Pancreas (tissue), 10 donors: ENCODE measurements at regions of chr3 and their contacts with region 1.

Region 1: DNA sequence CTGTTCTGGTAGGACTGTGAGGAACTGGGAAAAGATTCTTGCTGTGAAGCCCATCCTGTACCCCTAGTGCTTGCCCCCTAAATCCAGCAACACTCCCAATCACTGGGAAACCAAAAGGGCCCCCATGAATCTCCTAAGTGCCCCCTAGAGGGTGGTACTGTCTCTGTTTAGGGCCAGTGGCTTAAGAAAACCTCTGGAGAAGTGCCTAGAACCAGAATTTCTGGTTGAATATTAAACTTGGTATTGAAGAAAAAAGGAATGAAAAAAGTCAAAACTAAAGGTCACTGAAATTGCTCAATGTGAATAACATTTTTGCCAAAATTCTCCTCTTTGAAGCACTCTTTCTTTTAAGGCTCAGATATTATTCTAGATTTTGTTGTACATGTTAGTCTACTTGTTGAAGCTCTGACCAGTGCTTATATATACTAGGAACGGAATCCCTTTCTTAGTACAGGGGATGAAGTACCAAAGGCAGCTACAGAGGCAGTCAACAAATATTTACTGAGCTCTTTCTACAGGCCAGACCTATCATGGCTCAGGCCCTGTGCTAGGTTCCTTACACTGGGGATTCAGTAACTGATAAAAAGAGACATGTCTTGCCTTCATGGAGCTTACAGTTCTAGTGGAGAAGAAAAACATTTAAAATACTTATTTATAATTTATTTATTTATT is 138.8 kb downstream of the MYLK start:
- DNase-seq: no peak
- ATAC-seq: peak in 3 of 4 donors; percentile 60 to 85 (median 68)
- H3K4me3 ChIP-seq: no peak overlapping the region
- H3K27ac ChIP-seq: no peak overlapping the region
- H3K4me1 ChIP-seq: peaks cover 0 to 3% (median 0%) of the 10 kb centered on the region in 3 donors
- H3K27me3 ChIP-seq: no peaks in the 10 kb centered on the region
- CTCF ChIP-seq: peak in 1 of 4 donors; percentile 17

Region 2: DNA sequence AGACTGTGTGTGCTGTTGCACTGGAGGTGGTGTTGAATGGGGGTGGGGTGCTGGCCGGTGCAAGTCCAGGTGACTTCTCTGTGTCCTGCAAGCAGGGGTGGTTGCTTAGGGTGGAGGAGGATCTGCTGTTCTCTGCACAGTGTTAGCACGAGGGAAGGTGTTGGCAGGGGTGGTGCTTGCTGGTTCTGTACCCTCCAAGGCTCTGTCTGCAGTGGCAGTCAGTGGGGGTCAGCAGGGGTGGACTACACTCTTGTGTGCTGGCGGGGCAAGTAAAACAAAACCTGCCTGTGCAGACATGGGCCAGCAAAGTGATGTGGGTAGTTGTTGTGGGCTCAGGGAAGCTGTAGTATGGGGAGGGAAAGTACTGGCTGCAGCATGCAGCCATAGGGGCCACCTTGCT is 241.1 kb after region 1 on chr3:
- intact Hi-C with region 1: loop called in 1 of 3 experiments (anchors 10 kb)
- DNase-seq: no peak
- ATAC-seq: no peak
- H3K4me3 ChIP-seq: no peak overlapping the region
- H3K27ac ChIP-seq: no peak overlapping the region
- H3K4me1 ChIP-seq: no peaks in the 10 kb centered on the region
- H3K27me3 ChIP-seq: no peaks in the 10 kb centered on the region
- CTCF ChIP-seq: no peak